GM10248 (cell line): ENCODE measurements at regions of chr6 and their contacts with region 1.

Region 1: DNA sequence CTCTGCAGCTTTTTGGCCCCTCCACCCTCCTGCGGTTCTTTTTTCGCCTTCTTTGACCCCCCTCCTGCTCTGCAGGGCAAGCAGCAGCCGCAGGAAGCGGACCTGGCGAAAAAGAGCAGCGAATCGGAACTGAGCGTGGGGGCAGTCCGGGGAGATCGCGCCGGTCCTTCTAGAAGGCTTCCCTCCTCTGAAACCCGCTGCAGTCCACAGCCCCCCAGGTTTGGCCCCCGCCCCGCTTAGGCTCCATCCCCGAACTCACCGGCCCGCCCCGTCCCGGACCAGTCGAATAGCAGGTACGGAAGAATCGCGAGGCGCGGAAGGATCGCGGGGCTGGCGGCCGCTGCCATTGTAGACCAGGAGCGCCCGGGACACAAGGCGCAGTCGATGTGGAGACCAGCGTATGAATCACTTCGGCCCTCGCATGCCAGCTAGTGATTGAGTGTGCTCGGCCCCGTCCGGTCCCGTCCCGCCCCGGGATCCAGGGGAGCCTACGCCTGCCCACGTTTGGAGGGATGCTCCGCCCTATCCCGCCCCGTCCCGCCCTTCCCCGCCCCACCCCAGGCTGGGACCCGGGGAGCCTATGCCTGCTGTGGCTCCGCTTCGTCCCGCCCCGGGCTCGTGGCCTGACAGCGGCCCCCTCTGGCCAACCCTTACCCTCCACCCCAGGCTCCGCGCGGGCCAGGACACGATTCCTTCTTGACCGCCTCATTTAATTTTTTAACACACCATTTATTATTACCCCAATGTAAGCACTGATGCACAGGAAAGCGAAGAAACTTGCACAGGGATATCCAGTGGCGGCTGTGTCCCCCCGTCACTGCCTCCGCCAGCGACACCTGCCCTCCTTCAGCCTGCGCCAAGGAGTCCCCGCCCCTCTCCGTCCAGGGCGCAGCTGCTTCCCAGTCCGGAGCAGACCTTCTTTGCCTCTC is at the start of gene ULBP3:
- DNase-seq: peak; percentile 83
- CTCF ChIP-seq: peak; percentile 56

Region 2: DNA sequence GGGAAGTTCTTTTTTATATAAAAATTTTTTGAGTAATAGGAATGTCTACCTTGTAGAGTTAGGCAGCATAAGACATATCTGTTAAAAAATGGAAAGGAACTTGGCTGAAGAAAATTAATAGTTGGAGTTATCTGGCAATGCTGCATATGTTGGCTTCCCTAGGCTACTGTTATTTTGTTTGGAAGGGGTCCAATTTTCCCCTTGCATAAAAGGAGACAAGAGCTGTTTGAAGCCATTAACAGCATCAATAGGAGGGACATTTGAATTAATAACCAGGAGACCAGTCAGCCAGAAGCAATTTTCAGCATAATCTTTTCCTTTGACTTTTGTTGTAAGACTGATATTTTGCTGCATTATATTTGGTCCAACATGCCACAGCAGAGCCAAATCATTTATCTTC is 832.4 kb before region 1 on chr6:
- CTCF ChIA-PET with region 1: no interaction called
- POLR2A ChIA-PET with region 1: no interaction called
- DNase-seq: no peak
- CTCF ChIP-seq: no peak

Region 3: DNA sequence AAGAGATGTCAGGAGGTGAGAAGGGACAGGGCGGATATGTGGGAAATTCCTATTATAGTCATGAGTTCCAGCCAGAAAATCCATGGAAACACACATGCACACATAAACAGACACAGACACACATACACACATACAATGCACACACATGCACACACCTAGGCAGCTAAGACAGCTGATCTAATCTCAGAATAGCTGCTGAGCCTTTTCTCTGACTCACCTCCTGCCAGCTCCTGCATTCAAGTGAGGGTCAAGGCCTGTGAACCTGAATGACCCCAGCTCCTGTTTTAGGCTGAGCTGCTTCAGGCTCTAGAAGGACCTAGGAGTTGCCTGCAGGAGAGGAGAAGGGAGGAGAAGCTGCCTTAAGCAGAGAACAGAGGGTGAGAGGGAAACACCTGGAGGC is 22.0 kb before region 1 on chr6:
- CTCF ChIA-PET with region 1: interaction called, 19 read pairs
- POLR2A ChIA-PET with region 1: no interaction called
- DNase-seq: no peak
- CTCF ChIP-seq: no peak

Region 4: DNA sequence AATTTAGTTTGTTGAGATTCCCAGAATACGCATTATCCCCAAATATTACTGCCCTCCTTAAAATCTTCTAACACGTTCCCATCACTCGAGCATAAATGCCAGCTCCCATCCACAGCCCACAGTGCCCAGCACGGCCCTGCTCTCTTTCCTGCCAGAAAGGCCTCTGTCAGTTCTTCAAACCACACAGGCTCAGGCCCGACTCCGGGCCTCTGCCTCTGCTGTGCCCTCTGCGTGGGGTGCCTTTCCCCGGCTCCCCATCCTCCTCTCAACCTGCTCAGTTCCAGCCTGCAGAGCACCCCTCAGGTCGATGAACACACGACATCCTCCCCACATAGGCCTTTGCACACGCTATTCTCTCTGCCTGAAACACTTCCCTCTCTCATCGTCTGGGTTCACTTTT is 12.8 kb before region 1 on chr6:
- CTCF ChIA-PET with region 1: interaction called, 19 read pairs
- POLR2A ChIA-PET with region 1: no interaction called
- DNase-seq: no peak
- CTCF ChIP-seq: no peak

Region 5: GRCh38 chr6:150099546-150099945 is 30.6 kb after region 1 on chr6:
- CTCF ChIA-PET with region 1: no interaction called
- POLR2A ChIA-PET with region 1: no interaction called
- DNase-seq: no peak
- CTCF ChIP-seq: no peak